Transverse colon (tissue), 4 donors: ENCODE measurements at regions of chr17 and their contacts with region 1.

Region 1: DNA sequence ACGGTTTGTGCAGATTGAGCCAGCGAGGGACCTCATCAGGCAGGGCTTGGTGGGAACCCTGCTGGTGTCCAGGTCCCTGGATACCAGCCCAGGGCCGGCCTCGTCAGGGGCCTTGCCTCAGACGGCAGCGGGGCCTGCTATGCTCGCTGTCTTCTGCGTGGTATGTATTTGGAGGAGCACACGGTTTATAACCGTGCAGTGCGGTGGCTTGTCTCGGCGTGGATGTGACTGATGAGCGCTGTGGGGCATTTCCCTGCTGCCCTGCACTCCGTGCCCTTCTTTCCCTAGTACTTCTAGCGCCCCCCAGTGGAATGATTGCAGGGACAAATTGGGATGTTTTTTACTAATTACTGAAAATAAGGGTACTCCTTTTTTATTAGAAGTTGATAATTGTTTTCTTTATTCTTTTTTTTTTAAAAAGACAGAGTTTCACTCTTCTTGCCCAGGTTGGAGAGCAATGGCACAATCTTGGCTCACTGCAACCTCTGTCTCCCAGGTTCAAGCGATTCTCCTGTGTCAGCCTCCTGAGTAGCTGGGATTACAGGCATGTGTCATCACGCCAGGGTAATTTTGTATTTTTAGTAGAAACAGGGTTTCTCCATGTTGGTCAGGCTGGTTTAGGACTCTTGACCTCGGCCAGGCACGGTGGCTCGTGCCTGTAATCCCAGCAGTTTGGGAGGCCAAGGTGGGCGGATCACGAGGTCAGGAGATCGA is 15.3 kb downstream of the TBCD start:
- DNase-seq: peak; percentile 72
- H3K4me3 ChIP-seq: no peak overlapping the region
- H3K27ac ChIP-seq: peak overlapping the region in 1 of 4 donors; percentile 40
- H3K4me1 ChIP-seq: peaks cover 0 to 21% (median 3%) of the 10 kb centered on the region in 4 donors
- H3K27me3 ChIP-seq: no peaks in the 10 kb centered on the region
- CTCF ChIP-seq: peak; percentile 58 to 74 (median 69)
- EP300 ChIP-seq: no peak
- POLR2A ChIP-seq: no peak

Region 2: GRCh38 chr17:82292251-82293154 is 474.7 kb before region 1 on chr17:
- in situ Hi-C with region 1: no loop called
- intact Hi-C with region 1: no loop called
- DNase-seq: peak; percentile 97
- H3K4me3 ChIP-seq: peak overlapping the region; percentile 69 to 91 (median 78)
- H3K27ac ChIP-seq: peak overlapping the region; percentile 95 to 99 (median 98)
- H3K4me1 ChIP-seq: peaks cover 35 to 63% (median 54%) of the 10 kb centered on the region in 4 donors
- H3K27me3 ChIP-seq: no peaks in the 10 kb centered on the region
- CTCF ChIP-seq: no peak
- EP300 ChIP-seq: no peak
- POLR2A ChIP-seq: peak; percentile 97

Region 3: DNA sequence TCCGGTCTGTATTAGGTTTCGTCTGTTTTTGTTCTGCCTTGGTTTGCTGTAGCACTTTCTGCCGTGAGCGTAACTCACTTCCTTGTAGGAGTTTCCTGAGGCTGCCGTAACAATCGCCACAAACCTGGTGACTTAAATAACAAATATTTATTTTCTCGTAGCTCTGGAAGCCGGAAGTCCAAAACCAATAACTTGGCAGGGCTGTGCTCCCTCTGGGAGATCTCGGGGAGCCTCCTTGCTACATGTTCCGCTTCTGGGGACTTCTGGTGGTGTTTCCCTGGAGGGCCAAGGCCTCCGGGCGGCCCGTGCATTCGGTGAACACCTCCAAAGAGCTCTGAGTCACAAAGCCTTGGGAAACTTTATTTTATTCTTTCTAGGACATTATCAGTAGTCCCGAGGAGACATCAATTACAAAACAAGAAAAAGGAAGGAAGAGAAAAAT is 112.1 kb before region 1 on chr17:
- in situ Hi-C with region 1: loop called in 3 of 4 experiments (anchors 10 to 25 kb)
- intact Hi-C with region 1: loop called (anchors 10 kb)
- DNase-seq: peak; percentile 60
- H3K4me3 ChIP-seq: peak overlapping the region in 1 of 4 donors; percentile 31
- H3K27ac ChIP-seq: peak overlapping the region; percentile 75 to 86 (median 83)
- H3K4me1 ChIP-seq: peaks cover 10 to 25% (median 23%) of the 10 kb centered on the region in 4 donors
- H3K27me3 ChIP-seq: no peaks in the 10 kb centered on the region
- CTCF ChIP-seq: no peak
- EP300 ChIP-seq: no peak
- POLR2A ChIP-seq: peak; percentile 53

Region 4: GRCh38 chr17:82674656-82675475 is 92.3 kb before region 1 on chr17:
- in situ Hi-C with region 1: loop called in 2 of 4 experiments (anchors 5 to 25 kb)
- intact Hi-C with region 1: no loop called
- DNase-seq: no peak
- H3K4me3 ChIP-seq: no peak overlapping the region
- H3K27ac ChIP-seq: peak overlapping the region in 1 of 4 donors; percentile 29
- H3K4me1 ChIP-seq: peaks cover 0 to 20% (median 9%) of the 10 kb centered on the region in 4 donors
- H3K27me3 ChIP-seq: no peaks in the 10 kb centered on the region
- CTCF ChIP-seq: no peak
- EP300 ChIP-seq: no peak
- POLR2A ChIP-seq: no peak